ENCODE measurements at regions of chr10 and their contacts with region 1.

Region 1: GRCh38 chr10:132223156-132223590 is 36.4 kb downstream of the DPYSL4 start:
- DNase-seq: peak; percentile 40 to 73 (median 60)
- ATAC-seq: peak; percentile 96
- H3K4me3 ChIP-seq: no peak overlapping the region
- H3K4me3 Mint-ChIP-seq: no peak overlapping the region
- H3K27ac ChIP-seq: no peak overlapping the region
- H3K27ac Mint-ChIP-seq: no peak overlapping the region
- H3K4me1 ChIP-seq: peaks cover 0 to 6% of the 10 kb centered on the region in 2 donors
- H3K4me1 Mint-ChIP-seq: peaks cover 0 to 8% (median 5%) of the 10 kb centered on the region in 7 donors
- H3K27me3 ChIP-seq: no peaks in the 10 kb centered on the region
- H3K27me3 Mint-ChIP-seq: no peaks in the 10 kb centered on the region

Region 2: DNA sequence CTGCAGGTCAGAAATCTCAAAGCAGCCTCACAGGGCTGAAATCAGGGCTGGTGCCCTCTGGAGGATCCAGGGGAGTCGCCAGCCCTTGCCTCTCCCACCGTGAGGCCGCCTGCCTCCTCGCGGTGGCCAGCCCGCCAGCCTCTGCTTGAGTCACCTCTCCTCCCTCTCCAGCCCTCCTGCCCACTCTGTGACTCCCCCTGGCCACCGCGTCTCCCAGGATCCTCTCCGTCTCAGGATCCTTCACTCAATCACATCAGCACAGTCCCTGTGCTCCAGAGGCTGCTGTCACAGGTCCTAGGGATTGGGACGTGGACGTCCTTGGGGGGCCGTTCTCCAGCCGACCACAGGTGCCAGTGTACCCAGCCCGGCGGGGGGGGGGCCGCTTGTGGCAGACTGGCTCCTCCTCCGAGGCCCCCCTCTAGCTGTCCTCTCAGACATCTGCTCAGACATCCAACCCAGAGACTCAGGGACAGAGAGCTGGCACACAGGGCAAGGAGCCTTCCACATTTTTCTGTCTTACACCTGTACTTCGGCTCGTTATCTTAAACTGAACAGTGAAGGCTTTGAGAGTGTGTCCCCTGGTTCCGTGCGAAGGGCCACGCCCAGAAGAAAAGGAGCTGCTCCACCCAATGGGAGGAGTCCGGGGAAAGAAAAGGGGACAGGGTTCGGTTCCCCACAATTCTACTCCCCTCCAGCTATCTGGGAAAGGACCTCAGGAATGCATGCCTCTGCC is 331.8 kb before region 1 on chr10:
- CTCF ChIA-PET with region 1: no interaction called
- POLR2A ChIA-PET with region 1: no interaction called
- intact Hi-C with region 1: no loop called
- DNase-seq: no peak
- ATAC-seq: no peak
- H3K4me3 ChIP-seq: no peak overlapping the region
- H3K4me3 Mint-ChIP-seq: no peak overlapping the region
- H3K27ac ChIP-seq: no peak overlapping the region
- H3K27ac Mint-ChIP-seq: no peak overlapping the region
- H3K4me1 ChIP-seq: peaks cover 5 to 7% of the 10 kb centered on the region in 2 donors
- H3K4me1 Mint-ChIP-seq: peaks cover under 1 to 16% (median 13%) of the 10 kb centered on the region in 7 donors
- H3K27me3 ChIP-seq: no peaks in the 10 kb centered on the region
- H3K27me3 Mint-ChIP-seq: peaks cover 0 to 11% (median 0%) of the 10 kb centered on the region in 5 donors

Region 3: DNA sequence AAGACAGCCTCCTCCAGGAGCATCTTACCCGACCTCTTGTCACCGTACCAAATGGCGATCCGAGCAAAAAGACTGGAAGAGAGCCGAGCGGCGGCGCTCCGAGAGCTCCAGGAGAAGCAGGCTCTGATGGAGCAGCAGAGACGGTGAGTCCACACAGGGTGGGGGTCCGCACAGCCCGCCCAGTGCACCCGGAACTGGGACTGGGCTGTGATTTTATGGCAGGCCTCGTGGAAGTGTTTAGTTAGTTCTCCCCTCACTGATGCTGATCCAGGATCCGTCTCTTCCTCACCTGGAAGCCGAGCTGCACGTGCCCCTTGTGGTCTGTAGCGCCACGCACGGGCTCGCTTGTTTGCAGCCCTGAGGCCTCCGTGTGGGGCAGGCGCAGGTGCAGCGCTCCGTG is 128.4 kb after region 1 on chr10:
- CTCF ChIA-PET with region 1: interaction called, 6 read pairs
- POLR2A ChIA-PET with region 1: no interaction called
- intact Hi-C with region 1: loop called (anchors 1 kb)
- DNase-seq: no peak
- ATAC-seq: no peak
- H3K4me3 ChIP-seq: no peak overlapping the region
- H3K4me3 Mint-ChIP-seq: no peak overlapping the region
- H3K27ac ChIP-seq: no peak overlapping the region
- H3K27ac Mint-ChIP-seq: no peak overlapping the region
- H3K4me1 ChIP-seq: no peaks in the 10 kb centered on the region
- H3K4me1 Mint-ChIP-seq: peaks cover 0 to 9% (median 5%) of the 10 kb centered on the region in 7 donors
- H3K27me3 ChIP-seq: no peaks in the 10 kb centered on the region
- H3K27me3 Mint-ChIP-seq: no peaks in the 10 kb centered on the region